ENCODE measurements at regions of chr15 and their contacts with region 1.

Region 1: GRCh38 chr15:60172143-60172542 is 168.0 kb downstream of the FOXB1 start:
- DNase-seq: peak; percentile 30
- H3K4me3 ChIP-seq: no peak overlapping the region
- H3K27ac ChIP-seq: no peak overlapping the region
- H3K4me1 ChIP-seq: no peaks in the 10 kb centered on the region
- H3K27me3 ChIP-seq: no peaks in the 10 kb centered on the region
- CTCF ChIP-seq: no peak

Region 2: DNA sequence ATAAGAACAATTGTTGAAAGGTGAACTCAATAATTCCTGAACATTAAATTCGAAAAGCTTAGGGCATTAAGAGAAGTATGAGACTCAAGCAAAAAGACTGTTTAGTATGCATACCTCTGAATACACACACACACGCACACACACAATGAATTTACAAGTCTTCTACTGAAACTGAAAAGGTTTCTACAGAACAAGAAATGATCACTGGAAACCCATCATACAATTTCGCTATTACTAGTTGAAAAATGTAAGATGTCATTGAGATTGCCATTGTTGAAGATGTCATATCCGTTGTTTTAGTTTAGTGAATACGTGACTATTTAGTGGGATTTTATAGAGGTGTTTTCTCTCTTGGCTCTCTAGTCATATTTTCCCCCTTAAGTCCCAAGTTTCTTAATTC is 61.2 kb before region 1 on chr15:
- CTCF ChIA-PET with region 1: no interaction called
- dilution Hi-C with region 1: loop called (anchors 5 kb)
- in situ Hi-C with region 1: no loop called
- intact Hi-C with region 1: no loop called
- DNase-seq: no peak
- H3K4me3 ChIP-seq: no peak overlapping the region
- H3K27ac ChIP-seq: no peak overlapping the region
- H3K4me1 ChIP-seq: no peaks in the 10 kb centered on the region
- H3K27me3 ChIP-seq: no peaks in the 10 kb centered on the region
- CTCF ChIP-seq: no peak

Region 3: DNA sequence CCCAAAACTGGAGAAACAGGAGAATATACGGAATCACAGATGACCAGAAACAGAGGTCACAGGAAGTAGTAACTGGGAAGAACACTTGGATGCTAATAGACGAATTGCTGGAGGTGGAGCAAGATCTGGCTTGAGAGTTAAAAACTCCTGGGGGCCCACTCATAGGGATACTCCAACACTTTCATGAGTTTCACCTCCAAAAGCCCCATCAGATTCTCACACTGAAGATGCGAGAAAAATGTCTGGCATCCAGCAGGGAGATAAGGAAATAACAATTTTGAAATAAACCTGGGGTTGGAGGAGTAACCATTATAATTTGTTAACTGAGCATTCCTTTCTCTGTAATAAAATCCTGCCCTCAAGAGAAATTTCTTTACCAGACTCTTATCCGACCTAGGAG is 71.6 kb after region 1 on chr15:
- CTCF ChIA-PET with region 1: no interaction called
- dilution Hi-C with region 1: no loop called
- in situ Hi-C with region 1: no loop called
- intact Hi-C with region 1: no loop called
- DNase-seq: no peak
- H3K4me3 ChIP-seq: no peak overlapping the region
- H3K27ac ChIP-seq: no peak overlapping the region
- H3K4me1 ChIP-seq: no peaks in the 10 kb centered on the region
- H3K27me3 ChIP-seq: no peaks in the 10 kb centered on the region
- CTCF ChIP-seq: no peak